ENCODE measurements at regions of chr6 and their contacts with region 1.

Region 1: DNA sequence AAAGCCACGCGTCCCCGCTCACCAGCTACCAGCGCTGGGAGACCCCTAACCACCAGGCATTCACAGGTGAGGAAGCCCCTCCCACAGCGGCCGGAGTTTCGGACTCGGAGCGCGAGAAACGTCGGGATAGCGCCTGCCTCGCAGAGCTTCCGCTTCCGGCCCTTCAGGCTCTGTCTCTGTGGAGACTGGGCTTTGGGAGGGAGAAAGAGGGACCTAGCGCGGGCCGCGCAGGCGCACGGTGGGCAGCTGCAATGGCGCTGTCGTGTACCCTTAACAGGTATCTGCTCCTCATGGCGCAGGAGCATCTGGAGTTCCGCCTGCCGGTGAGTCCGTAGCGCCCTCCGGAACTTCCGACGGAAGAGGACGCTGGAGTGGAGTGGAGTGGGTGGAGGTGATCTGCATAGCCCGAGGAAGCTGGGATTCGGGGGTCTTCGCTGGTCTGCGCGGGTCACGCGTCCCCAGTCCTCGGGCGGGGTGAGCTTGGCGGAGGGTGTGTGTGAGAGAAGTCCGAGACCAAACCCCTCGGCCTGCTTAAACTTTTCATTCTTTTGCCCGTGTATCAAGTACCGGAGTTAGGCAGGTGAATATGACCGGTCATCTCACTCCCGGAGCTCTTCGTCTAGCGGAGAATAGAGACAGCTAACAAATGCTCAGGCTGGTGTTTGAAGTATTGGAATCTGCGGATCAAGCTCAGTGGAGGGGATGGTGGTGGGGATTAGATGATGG is at the start of gene TRMT11:
- DNase-seq: peak; percentile 83
- ATAC-seq: peak; percentile 99
- H3K4me3 Mint-ChIP-seq: peak within 1 kb of the TSS; percentile 13
- H3K27ac Mint-ChIP-seq: no peak within 1 kb of the TSS
- H3K4me1 Mint-ChIP-seq: peaks cover 13% of the 10 kb centered on the region
- H3K27me3 Mint-ChIP-seq: no peaks in the 10 kb centered on the region
- total RNA-seq, gene TRMT11: 17.1 to 18.1 TPM

Region 2: GRCh38 chr6:125974214-125974866 is 12.1 kb before region 1 on chr6:
- CTCF ChIA-PET with region 1: interaction called, 49 read pairs
- POLR2A ChIA-PET with region 1: no interaction called
- DNase-seq: no peak
- ATAC-seq: peak; percentile 81
- H3K4me3 Mint-ChIP-seq: no peak overlapping the region
- H3K27ac Mint-ChIP-seq: no peak overlapping the region
- H3K4me1 Mint-ChIP-seq: peaks cover 6% of the 10 kb centered on the region
- H3K27me3 Mint-ChIP-seq: no peaks in the 10 kb centered on the region

Measured in activated CD8-positive, alpha-beta T cell treated with anti-CD3 and anti-CD28 coated beads, Interleukin-2, amount 10 ng/mL, durations not matched to agents 7 days and 5 days (primary cell).